HEK293T (cell line): ENCODE measurements at regions of chr1 and their contacts with region 1.

Region 1: GRCh38 chr1:223133824-223134435 is 9.1 kb downstream of the TLR5 start:
- DNase-seq: peak; percentile 97

Region 2: DNA sequence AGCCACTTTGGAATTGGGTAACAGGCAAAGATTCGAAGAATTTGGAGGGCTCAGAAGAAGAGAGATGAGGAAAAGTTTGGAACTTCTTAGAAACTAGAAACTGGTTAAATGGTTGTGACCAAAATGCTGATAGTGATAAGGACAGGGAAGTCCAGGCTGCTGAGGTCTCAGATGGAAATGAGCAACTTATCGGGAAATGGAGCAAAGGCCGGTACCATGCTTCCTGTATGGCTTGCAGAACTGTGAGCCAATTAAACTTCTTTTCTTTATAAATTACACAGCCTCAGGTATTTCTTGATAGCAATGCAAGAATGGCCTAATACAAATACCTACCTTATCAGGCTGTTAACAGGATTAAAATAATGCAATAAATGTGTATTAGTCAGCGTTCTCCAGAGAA is 18.5 kb after region 1 on chr1:
- CTCF ChIA-PET with region 1: interaction called, 13 read pairs
- POLR2A ChIA-PET with region 1: no interaction called
- DNase-seq: no peak

Region 3: GRCh38 chr1:223683586-223684487 is 549.9 kb after region 1 on chr1:
- CTCF ChIA-PET with region 1: interaction called, 12 read pairs
- POLR2A ChIA-PET with region 1: no interaction called
- DNase-seq: peak; percentile 83